GM12878 (cell line): ENCODE measurements at regions of chr1 and their contacts with region 1.

Region 1: DNA sequence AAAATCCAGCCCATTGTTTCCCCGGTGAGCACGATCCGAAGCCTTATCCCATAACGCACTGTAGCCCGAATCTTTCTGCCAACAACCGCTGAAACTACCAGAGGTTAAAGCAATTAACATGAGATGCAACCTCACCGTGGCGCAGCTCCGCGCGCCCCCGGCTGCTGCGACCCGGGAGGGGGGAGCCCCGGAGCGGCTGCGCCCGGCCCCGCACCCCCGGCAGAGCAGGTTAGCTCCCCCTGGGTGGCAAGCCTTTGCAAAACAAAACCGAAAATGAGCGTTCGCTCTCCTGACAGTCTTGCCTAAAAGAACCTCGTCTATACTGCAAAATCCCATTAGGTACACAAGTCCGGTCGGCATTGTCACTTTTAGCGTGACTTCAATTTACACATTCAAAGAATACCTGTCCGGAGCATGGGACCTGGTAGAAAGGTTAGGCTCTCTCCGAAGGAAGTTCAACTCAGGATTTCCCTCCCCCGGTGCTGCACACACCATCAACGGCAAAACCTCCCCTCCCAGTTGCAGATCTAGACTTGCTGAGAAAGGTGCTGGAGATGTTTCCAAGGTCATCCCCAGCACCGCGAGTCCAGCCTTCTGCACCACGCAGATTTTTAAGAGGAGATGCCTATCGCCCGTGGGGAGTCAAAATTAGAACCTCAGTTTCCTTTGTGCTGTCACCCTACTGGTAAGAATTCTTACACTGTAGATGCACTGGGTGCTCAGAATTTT is 107.5 kb downstream of the ZNF281 start:
- DNase-seq: no peak
- ATAC-seq: peak; percentile 80
- H3K4me3 ChIP-seq: peak overlapping the region; percentile 81
- H3K27ac ChIP-seq: no peak overlapping the region
- H3K4me1 ChIP-seq: peaks cover 22% of the 10 kb centered on the region
- H3K27me3 ChIP-seq: peaks cover 0 to 4% of the 10 kb centered on the region in 2 experiments; a peak in 2 of 4 replicates
- CTCF ChIP-seq: 0 out of 6 replicates have a peak, but pooled peaks of 1 of the 3 experiments have one; percentile 2
- EP300 ChIP-seq: no peak
- POLR2A ChIP-seq: no peak
- RAD21 ChIP-seq: 0 out of 2 replicates have a peak, but pooled peaks have one; percentile 20

Region 2: GRCh38 chr1:200146100-200146499 is 156.3 kb before region 1 on chr1:
- CTCF ChIA-PET with region 1: interaction called, 7 read pairs
- POLR2A ChIA-PET with region 1: no interaction called
- RAD21 ChIA-PET with region 1: interaction called, 10 read pairs
- SMC1A ChIA-PET with region 1: interaction called, 4 read pairs
- in situ Hi-C with region 1: no loop called
- intact Hi-C with region 1: no loop called
- DNase-seq: no peak
- ATAC-seq: peak; percentile 63
- H3K4me3 ChIP-seq: no peak overlapping the region
- H3K27ac ChIP-seq: no peak overlapping the region
- H3K4me1 ChIP-seq: peaks cover 9% of the 10 kb centered on the region; the same call in 1 of the 2 replicates
- H3K27me3 ChIP-seq: no peaks in the 10 kb centered on the region
- CTCF ChIP-seq: no peak
- EP300 ChIP-seq: no peak
- POLR2A ChIP-seq: no peak
- RAD21 ChIP-seq: no peak

Region 3: DNA sequence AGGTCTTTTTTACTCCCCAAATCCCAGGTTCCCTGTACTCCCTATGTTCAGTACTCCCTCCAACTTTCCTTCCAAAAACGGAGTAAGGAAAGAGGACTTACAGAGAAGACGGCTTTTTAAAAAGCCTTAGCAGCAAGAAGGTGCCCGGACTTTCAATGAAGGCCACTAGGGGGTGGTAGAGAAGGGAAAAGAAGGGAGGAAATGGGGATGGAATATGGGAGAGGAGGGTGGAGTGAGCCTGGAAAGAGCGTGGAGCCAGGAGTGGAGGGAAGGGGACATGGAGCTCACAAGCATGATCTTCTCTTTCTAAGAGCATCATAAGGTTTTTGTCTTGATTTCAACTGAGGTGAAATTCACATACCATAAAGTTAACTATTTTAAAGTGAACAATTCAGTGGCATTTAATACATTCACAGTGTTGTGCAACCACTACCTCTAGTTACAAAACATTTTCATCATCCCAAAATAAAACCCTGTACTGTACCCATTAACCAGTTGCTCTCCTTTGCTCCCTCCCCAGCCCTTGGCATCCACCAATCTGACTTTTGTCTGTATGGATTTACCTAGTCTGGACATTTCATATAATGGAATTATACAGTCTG is 22.4 kb before region 1 on chr1:
- CTCF ChIA-PET with region 1: interaction called, 23 read pairs
- POLR2A ChIA-PET with region 1: no interaction called
- RAD21 ChIA-PET with region 1: interaction called, 7 read pairs
- SMC1A ChIA-PET with region 1: interaction called, 14 read pairs
- in situ Hi-C with region 1: no loop called
- intact Hi-C with region 1: no loop called
- DNase-seq: no peak
- ATAC-seq: peak; percentile 58
- H3K4me3 ChIP-seq: no peak overlapping the region
- H3K27ac ChIP-seq: no peak overlapping the region
- H3K4me1 ChIP-seq: 0 out of 2 replicates have a peak, but pooled peaks cover 5% of the 10 kb centered on the region
- H3K27me3 ChIP-seq: no peaks in the 10 kb centered on the region; a peak in 1 of 4 replicates
- CTCF ChIP-seq: peak; percentile 66 to 72 (median 71)
- EP300 ChIP-seq: no peak
- POLR2A ChIP-seq: no peak
- RAD21 ChIP-seq: peak; percentile 83

Region 4: GRCh38 chr1:200319148-200319547 is 16.8 kb after region 1 on chr1:
- CTCF ChIA-PET with region 1: interaction called, 14 read pairs
- POLR2A ChIA-PET with region 1: no interaction called
- RAD21 ChIA-PET with region 1: interaction called, 3 read pairs
- SMC1A ChIA-PET with region 1: interaction called, 4 read pairs
- in situ Hi-C with region 1: no loop called
- intact Hi-C with region 1: no loop called
- DNase-seq: no peak
- ATAC-seq: no peak
- H3K4me3 ChIP-seq: no peak overlapping the region
- H3K27ac ChIP-seq: no peak overlapping the region
- H3K4me1 ChIP-seq: no peaks in the 10 kb centered on the region
- H3K27me3 ChIP-seq: 0 out of 4 replicates have a peak, but pooled peaks cover 0 to 4% of the 10 kb centered on the region in 2 experiments
- CTCF ChIP-seq: no peak
- EP300 ChIP-seq: no peak
- POLR2A ChIP-seq: no peak
- RAD21 ChIP-seq: no peak

Region 5: GRCh38 chr1:200330741-200331430 is 28.5 kb after region 1 on chr1:
- CTCF ChIA-PET with region 1: no interaction called
- POLR2A ChIA-PET with region 1: no interaction called
- RAD21 ChIA-PET with region 1: no interaction called
- SMC1A ChIA-PET with region 1: no interaction called
- in situ Hi-C with region 1: no loop called
- intact Hi-C with region 1: no loop called
- DNase-seq: no peak
- ATAC-seq: no peak
- H3K4me3 ChIP-seq: no peak overlapping the region
- H3K27ac ChIP-seq: no peak overlapping the region
- H3K4me1 ChIP-seq: no peaks in the 10 kb centered on the region
- H3K27me3 ChIP-seq: no peaks in the 10 kb centered on the region; a peak in 2 of 4 replicates
- CTCF ChIP-seq: no peak
- EP300 ChIP-seq: no peak
- POLR2A ChIP-seq: no peak
- RAD21 ChIP-seq: no peak

Region 6: DNA sequence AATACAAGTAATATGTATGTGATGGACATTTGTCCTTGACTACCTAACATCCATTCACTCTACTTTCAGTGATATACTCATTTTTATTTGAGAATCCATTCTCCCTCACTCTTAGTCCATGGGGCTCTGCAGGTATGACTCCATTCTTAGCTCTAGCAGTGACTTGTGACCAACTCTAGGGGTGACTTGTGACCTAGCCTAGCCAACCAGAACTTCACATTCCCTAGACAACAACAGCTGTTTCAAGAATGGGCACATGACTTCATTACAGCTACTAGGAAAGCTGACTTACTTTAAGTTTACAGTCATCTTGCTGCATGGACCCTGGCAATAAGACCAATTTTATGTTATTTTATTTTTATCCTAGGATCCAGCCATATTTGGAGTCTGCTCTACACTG is 391.0 kb after region 1 on chr1:
- CTCF ChIA-PET with region 1: no interaction called
- POLR2A ChIA-PET with region 1: no interaction called
- RAD21 ChIA-PET with region 1: no interaction called
- SMC1A ChIA-PET with region 1: no interaction called
- in situ Hi-C with region 1: no loop called
- intact Hi-C with region 1: no loop called
- DNase-seq: no peak
- ATAC-seq: peak; percentile 71
- H3K4me3 ChIP-seq: no peak overlapping the region
- H3K27ac ChIP-seq: no peak overlapping the region
- H3K4me1 ChIP-seq: no peaks in the 10 kb centered on the region
- H3K27me3 ChIP-seq: no peaks in the 10 kb centered on the region
- CTCF ChIP-seq: no peak
- EP300 ChIP-seq: no peak
- POLR2A ChIP-seq: no peak
- RAD21 ChIP-seq: no peak

Region 7: GRCh38 chr1:200784576-200784975 is 482.2 kb after region 1 on chr1:
- CTCF ChIA-PET with region 1: no interaction called
- POLR2A ChIA-PET with region 1: no interaction called
- RAD21 ChIA-PET with region 1: no interaction called
- SMC1A ChIA-PET with region 1: no interaction called
- in situ Hi-C with region 1: no loop called
- intact Hi-C with region 1: no loop called
- DNase-seq: no peak
- ATAC-seq: no peak
- H3K4me3 ChIP-seq: no peak overlapping the region
- H3K27ac ChIP-seq: no peak overlapping the region
- H3K4me1 ChIP-seq: peaks cover 6% of the 10 kb centered on the region
- H3K27me3 ChIP-seq: no peaks in the 10 kb centered on the region
- CTCF ChIP-seq: no peak
- EP300 ChIP-seq: no peak
- POLR2A ChIP-seq: no peak
- RAD21 ChIP-seq: no peak